Endothelial cell of umbilical vein (primary cell): ENCODE measurements at regions of chr11 and their contacts with region 1.

Region 1: DNA sequence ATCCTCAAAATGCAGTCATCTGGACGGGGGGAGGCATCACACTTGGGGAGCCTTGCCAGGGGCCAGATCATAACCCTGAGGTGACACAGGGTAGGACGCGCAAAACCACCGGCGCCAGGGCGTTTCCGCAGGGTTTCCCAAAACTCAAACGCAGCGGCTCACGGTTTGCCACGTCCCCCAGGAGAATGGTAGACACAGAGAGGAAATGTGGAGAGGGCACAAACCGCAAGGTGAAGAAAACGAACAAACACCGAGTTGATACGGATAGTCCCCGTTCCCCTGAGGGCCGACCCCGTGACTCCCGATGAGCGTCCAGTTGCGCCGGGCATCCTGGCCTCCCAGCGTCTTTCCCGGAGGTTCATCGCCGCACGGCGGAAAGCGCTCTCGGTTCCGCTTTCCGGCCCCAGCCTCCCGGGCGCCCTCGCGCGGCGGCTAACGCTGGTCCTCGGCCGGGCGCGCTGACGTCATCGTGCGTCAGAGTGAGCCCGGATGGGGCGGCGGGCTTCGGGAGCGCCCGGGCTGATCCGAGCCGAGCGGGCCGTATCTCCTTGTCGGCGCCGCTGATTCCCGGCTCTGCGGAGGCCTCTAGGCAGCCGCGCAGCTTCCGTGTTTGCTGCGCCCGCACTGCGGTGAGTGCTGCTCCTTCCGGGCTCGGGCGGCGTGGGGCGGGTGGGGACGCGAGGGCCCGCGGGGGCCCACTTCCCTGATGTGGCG is at the start of gene BIRC2:
- DNase-seq: peak; percentile 91
- H3K4me3 ChIP-seq: peak within 1 kb of the TSS; percentile 69 to 99 (median 92)
- H3K27ac ChIP-seq: peak within 1 kb of the TSS; percentile 89
- H3K4me1 ChIP-seq: peaks cover 43% of the 10 kb centered on the region
- H3K27me3 ChIP-seq: no peaks in the 10 kb centered on the region
- CTCF ChIP-seq: peak; percentile 70 to 88
- POLR2A ChIP-seq: peak; percentile 90
- total RNA-seq, gene BIRC2: 47.3 and 49.9 TPM in 2 replicates

Region 2: GRCh38 chr11:102109896-102110760 is 236.8 kb before region 1 on chr11 and contains the start of gene YAP1:
- CTCF ChIA-PET with region 1: interaction called, 3 read pairs
- POLR2A ChIA-PET with region 1: no interaction called
- dilution Hi-C with region 1: no loop called
- intact Hi-C with region 1: loop called (anchors 1 kb)
- DNase-seq: peak; percentile 89
- H3K4me3 ChIP-seq: peak within 1 kb of the TSS; percentile 85 to 99 (median 88)
- H3K27ac ChIP-seq: peak within 1 kb of the TSS; percentile 72
- H3K4me1 ChIP-seq: peaks cover 11% of the 10 kb centered on the region
- H3K27me3 ChIP-seq: peaks cover 2 to 18% of the 10 kb centered on the region in 2 experiments
- CTCF ChIP-seq: no peak
- POLR2A ChIP-seq: no peak
- total RNA-seq, gene YAP1: 36.5 and 48.9 TPM in 2 replicates

Region 3: DNA sequence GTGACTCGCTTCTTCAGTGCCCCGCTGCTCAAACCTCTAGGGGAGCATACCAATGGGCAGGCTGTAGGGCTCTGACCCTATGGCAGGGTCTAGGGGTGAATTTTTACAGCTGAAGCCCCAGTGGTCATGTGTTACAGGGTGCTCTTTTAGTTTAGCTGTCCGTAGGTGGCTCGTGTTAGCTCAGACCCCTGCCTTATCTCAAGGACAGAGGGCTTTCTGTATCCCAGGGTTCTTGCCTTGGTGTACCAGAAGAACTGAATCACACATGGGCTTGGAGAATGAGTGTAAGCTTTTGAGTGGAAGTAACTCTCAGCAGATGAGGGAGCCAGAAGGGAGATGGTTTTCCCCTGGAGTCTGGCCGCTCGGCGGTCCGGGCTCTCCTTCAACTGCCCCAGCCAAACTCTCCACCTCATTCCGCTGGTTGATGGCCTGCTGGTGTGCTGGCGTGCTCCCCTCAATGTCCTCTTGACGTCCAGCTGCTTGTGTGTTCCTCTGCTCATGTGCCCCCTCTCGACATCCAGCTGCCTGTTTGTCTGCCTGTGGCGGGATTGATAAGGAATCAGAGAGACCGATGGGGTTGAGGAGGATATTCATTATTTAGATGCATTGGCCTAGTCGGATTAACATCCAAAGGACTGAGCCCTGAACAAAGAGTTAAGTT is 37.6 kb after region 1 on chr11:
- CTCF ChIA-PET with region 1: interaction called, 26 read pairs
- POLR2A ChIA-PET with region 1: no interaction called
- dilution Hi-C with region 1: no loop called
- intact Hi-C with region 1: loop called (anchors 2 kb)
- DNase-seq: peak; percentile 81
- H3K4me3 ChIP-seq: no peak overlapping the region
- H3K27ac ChIP-seq: peak overlapping the region; percentile 40
- H3K4me1 ChIP-seq: peaks cover 41% of the 10 kb centered on the region
- H3K27me3 ChIP-seq: no peaks in the 10 kb centered on the region
- CTCF ChIP-seq: no peak
- POLR2A ChIP-seq: no peak

Region 4: GRCh38 chr11:102410382-102410784 is 63.5 kb after region 1 on chr11:
- CTCF ChIA-PET with region 1: no interaction called
- POLR2A ChIA-PET with region 1: no interaction called
- dilution Hi-C with region 1: no loop called
- intact Hi-C with region 1: no loop called
- DNase-seq: no peak
- H3K4me3 ChIP-seq: no peak overlapping the region
- H3K27ac ChIP-seq: no peak overlapping the region
- H3K4me1 ChIP-seq: no peaks in the 10 kb centered on the region
- H3K27me3 ChIP-seq: no peaks in the 10 kb centered on the region
- CTCF ChIP-seq: no peak
- POLR2A ChIP-seq: no peak

Region 5: DNA sequence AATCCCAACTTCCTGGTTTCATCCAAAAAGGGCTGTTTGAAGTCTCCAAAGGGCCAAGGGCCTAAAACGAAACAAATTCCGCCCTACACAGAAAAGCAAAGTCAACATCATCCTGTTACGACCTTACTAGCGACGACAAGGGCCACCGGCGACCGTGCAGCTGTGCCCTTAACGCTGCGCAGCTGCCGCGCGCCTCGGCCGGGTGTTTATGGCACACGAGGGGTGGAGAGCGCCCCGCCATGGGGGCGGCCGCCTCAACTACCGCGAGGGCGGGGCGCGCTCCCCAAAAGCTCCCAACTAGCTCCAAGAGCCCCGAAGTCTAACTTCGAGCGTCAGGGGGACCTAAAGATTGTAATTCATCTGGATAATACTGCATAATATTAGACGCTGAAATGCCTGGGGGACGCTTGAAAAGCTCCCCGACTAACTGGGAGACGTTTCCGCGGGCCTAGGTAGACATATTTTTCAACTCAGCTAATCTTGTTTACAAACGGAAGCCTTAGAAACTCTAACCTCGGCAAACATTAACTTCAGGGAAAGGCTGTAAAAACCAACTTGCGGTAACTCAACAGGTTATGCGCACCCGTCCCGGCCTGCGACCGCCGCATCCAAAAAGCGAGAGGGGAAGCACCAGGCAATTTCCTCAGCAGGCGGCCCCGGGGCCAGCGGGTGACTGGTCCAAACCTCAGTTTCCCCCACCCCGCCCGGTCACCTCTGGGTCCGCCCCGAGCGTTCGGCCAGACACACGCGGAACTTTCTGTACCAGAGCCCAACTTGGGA is 105.0 kb after region 1 on chr11:
- CTCF ChIA-PET with region 1: interaction called, 4 read pairs
- POLR2A ChIA-PET with region 1: no interaction called
- dilution Hi-C with region 1: no loop called
- intact Hi-C with region 1: loop called (anchors 1 kb)
- DNase-seq: peak; percentile 70
- H3K4me3 ChIP-seq: peak overlapping the region; percentile 72 to 98 (median 91)
- H3K27ac ChIP-seq: peak overlapping the region; percentile 83
- H3K4me1 ChIP-seq: peaks cover 55% of the 10 kb centered on the region
- H3K27me3 ChIP-seq: no peaks in the 10 kb centered on the region
- CTCF ChIP-seq: no peak
- POLR2A ChIP-seq: no peak

Region 6: DNA sequence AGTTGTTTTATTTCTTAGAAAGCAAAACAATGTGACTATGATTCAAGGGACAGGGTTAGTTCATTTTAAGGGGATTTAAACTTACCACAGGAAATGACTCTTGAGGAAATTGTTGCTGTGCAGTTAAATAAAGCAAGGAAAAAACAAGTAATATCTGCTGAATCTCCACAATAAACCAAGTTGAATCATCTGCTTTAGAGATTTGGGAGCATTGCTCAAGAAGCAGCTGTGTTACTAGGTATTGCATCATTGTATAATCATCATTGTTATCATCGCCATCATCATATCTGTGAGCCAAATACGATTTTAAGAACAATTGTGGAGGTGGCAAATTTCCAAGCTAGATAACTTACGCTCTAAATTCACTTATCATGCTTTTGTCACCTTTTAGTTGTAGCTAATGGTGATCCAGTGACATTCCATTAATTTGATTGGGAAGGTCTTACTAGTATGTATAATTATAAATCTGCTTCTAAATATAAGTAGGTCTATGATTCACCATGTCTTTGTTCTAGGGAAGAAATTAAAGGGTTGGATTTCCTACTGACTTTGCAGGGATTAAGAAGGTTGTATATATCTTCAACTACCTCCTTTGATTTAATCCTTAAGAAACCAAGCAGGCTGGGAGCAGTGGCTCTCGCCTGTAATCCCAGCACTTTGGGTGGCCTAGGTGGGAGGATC is 413.6 kb after region 1 on chr11:
- CTCF ChIA-PET with region 1: no interaction called
- POLR2A ChIA-PET with region 1: no interaction called
- dilution Hi-C with region 1: no loop called
- intact Hi-C with region 1: loop called (anchors 1 kb)
- DNase-seq: peak; percentile 96
- H3K4me3 ChIP-seq: no peak overlapping the region
- H3K27ac ChIP-seq: peak overlapping the region; percentile 88
- H3K4me1 ChIP-seq: peaks cover 50% of the 10 kb centered on the region
- H3K27me3 ChIP-seq: peaks cover 0 to 3% of the 10 kb centered on the region in 2 experiments
- CTCF ChIP-seq: no peak
- POLR2A ChIP-seq: peak; percentile 41